Activated CD4-positive, alpha-beta memory T cell treated with anti-CD3 and anti-CD28 coated beads for 36 hours (primary cell): ENCODE measurements at regions of chr11 and their contacts with region 1.

Region 1: GRCh38 chr11:34243726-34244464 is 113.9 kb downstream of the ABTB2 start:
- DNase-seq: peak; percentile 83
- H3K4me3 Mint-ChIP-seq: no peak overlapping the region
- H3K27ac Mint-ChIP-seq: peak overlapping the region; percentile 38
- H3K4me1 Mint-ChIP-seq: peaks cover 74% of the 10 kb centered on the region
- H3K27me3 Mint-ChIP-seq: peaks cover 5% of the 10 kb centered on the region

Region 2: GRCh38 chr11:34051349-34052035 is 192.4 kb before region 1 on chr11 and contains the start of gene CAPRIN1:
- CTCF ChIA-PET with region 1: no interaction called
- POLR2A ChIA-PET with region 1: no interaction called
- intact Hi-C with region 1: loop called (anchors 5 kb)
- DNase-seq: peak; percentile 88
- H3K4me3 Mint-ChIP-seq: peak within 1 kb of the TSS; percentile 92
- H3K27ac Mint-ChIP-seq: peak within 1 kb of the TSS; percentile 96
- H3K4me1 Mint-ChIP-seq: peaks cover 18% of the 10 kb centered on the region
- H3K27me3 Mint-ChIP-seq: no peaks in the 10 kb centered on the region
- total RNA-seq, gene CAPRIN1: 261 to 264 TPM

Region 3: DNA sequence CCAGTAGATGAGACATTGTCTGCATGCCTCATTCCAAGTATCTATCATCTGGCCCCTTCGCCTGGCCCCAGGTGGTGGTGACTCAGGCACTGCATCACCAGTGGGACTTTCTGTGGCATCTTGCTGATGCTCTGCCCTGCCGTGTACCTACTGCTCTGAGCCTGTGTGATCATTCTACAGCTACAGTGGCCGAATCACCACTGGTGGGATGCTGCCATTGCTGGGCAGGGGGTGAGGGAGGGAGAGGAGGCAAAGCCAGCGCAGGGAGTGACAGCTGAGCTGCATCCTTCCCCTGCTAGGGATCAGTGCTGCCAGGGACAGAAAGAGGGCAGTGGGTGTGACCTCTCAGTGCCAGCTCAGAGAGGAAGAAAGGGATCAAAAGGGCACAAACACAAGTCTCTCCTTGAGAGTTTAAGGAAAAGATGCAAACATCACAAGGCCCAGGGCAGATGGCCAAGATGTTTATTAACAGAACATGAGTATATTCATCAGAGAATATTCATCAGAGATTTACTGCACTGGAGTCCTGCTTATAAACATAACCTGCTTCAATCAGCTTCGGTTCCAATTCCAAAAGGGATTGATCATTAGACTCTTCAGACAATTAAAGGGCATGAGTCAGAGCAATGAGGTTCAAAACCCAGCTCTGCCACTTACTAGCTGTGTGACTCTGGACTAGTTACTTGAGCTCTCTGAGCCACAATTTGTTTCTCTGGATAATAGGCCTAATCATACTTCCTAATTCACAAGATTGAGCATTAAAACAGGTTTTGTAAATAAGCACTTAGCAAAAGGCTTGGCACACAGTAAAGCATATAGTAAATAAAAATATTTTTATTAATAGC is 28.7 kb before region 1 on chr11:
- CTCF ChIA-PET with region 1: interaction called, 5 read pairs
- POLR2A ChIA-PET with region 1: interaction called, 5 read pairs
- intact Hi-C with region 1: loop called (anchors 1 kb)
- DNase-seq: peak; percentile 94
- H3K4me3 Mint-ChIP-seq: no peak overlapping the region
- H3K27ac Mint-ChIP-seq: peak overlapping the region; percentile 80
- H3K4me1 Mint-ChIP-seq: peaks cover 21% of the 10 kb centered on the region
- H3K27me3 Mint-ChIP-seq: peaks cover 6% of the 10 kb centered on the region

Region 4: GRCh38 chr11:34266090-34266912 is 22.4 kb after region 1 on chr11:
- CTCF ChIA-PET with region 1: no interaction called
- POLR2A ChIA-PET with region 1: no interaction called
- intact Hi-C with region 1: no loop called
- DNase-seq: no peak
- H3K4me3 Mint-ChIP-seq: no peak overlapping the region
- H3K27ac Mint-ChIP-seq: no peak overlapping the region
- H3K4me1 Mint-ChIP-seq: peaks cover 2% of the 10 kb centered on the region
- H3K27me3 Mint-ChIP-seq: peaks cover 6% of the 10 kb centered on the region